OCI-LY7 (cell line): ENCODE measurements at regions of chr19 and their contacts with region 1.

Region 1: DNA sequence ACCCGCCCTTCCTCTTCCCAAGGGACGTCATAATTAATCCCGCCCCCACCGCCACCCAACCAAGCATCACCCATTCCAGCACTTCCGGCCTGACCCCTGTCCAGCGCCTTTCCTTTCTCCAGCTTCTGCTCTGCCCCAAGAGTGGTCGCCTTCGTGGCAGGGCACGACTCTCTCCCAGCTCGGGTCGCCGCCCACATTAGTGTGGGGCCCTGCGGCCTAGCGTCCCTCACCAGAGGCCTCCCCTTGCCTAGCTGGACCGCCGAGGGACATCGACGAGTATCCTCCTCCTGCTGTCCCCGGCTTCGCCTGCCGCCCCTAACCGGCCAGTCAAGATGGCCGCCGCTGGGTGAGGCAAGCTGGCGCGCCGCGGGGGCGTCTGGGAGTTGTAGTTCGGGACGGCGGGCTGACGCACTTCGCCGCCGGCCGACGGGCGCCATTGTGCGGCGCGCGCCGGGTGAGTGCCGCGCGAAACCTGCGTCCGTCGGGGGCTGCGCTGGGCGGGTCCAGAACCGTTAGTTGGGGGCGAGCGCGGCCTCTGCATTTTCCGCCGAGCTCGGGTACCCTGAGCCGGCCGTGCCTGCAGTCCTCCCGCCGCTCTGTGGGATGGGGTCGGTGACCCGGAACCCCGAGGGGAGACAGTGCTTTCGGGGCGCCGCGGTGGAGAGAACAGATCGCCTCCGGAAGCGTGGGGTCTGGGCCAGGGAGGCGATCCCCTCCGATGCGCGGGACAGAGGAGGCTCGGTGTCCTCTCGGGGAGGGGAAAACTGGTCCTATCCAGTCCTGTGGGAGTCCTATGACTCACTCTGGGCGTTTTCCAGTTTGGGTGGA is at the start of gene ZNF274:
- DNase-seq: peak; percentile 96
- H3K4me3 ChIP-seq: peak within 1 kb of the TSS; percentile 85
- H3K27ac ChIP-seq: peak within 1 kb of the TSS; percentile 86
- H3K4me1 ChIP-seq: peaks cover 12% of the 10 kb centered on the region
- CTCF ChIP-seq: no peak
- total RNA-seq, gene ZNF274: 36.4 and 68.3 TPM in 2 replicates

Region 2: GRCh38 chr19:58278157-58279041 is 95.2 kb after region 1 on chr19 and contains the start of gene ZNF8:
- CTCF ChIA-PET with region 1: no interaction called
- POLR2A ChIA-PET with region 1: no interaction called
- intact Hi-C with region 1: loop called (anchors 2 kb)
- DNase-seq: peak; percentile 99
- H3K4me3 ChIP-seq: peak within 1 kb of the TSS; percentile 83
- H3K27ac ChIP-seq: peak within 1 kb of the TSS; percentile 52
- H3K4me1 ChIP-seq: peaks cover 18% of the 10 kb centered on the region
- CTCF ChIP-seq: no peak
- total RNA-seq, gene ZNF8: 7.3 and 7.8 TPM in 2 replicates

Region 3: DNA sequence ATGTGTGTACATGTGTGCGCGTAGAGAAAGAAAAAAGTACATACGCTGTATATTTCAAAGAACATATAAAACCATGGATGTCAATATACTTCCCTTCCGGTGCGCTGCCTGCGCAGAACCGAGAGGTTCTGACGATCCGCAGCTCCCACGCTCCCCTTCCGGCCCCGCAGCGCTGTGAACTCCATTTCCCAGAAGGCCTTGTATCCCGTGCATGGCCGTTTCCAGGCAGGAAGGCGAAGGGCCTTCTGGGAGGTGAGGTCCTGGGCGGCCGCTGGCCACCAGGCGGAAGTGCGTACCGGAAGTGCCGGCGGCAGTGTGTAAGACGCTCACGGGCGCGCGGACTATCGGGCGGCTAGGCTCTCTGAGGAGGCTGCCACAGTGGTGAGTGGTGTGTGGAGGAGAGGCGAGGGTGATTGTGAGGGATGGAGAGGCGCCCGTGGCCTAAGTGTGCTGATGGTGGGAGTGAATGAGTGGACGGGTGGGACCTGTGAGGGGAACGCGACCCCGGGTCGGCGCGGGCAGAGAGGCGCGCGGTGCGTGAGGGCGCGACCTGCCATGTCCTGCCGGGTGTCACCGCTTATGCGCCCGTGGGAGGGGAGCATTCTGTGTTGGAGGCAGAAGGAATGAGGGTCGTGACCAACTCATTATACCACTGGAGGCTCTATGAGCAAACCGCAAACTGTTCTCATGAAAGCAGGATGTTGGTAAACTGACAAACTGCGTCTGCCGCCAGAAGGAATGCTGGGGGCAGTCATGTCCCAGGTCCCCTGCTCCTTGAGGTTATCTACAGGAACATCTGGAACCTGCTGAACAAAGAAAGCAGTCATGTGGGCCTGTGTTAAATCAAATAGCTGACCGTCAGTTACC is 122.1 kb after region 1 on chr19 and contains the start of gene ERVK3-1:
- CTCF ChIA-PET with region 1: no interaction called
- POLR2A ChIA-PET with region 1: no interaction called
- intact Hi-C with region 1: loop called (anchors 2 kb)
- DNase-seq: peak; percentile 98
- H3K4me3 ChIP-seq: peak within 1 kb of the TSS; percentile 94
- H3K27ac ChIP-seq: peak within 1 kb of the TSS; percentile 46
- H3K4me1 ChIP-seq: peaks cover 15% of the 10 kb centered on the region
- CTCF ChIP-seq: no peak
- total RNA-seq, gene ERVK3-1: 61.7 and 79.6 TPM in 2 replicates

Region 4: GRCh38 chr19:58380722-58381466 is 197.7 kb after region 1 on chr19 and contains the start of gene ZNF837:
- CTCF ChIA-PET with region 1: no interaction called
- POLR2A ChIA-PET with region 1: no interaction called
- intact Hi-C with region 1: loop called (anchors 1 kb)
- DNase-seq: peak; percentile 100
- H3K4me3 ChIP-seq: peak within 1 kb of the TSS; percentile 71
- H3K27ac ChIP-seq: peak within 1 kb of the TSS; percentile 56
- H3K4me1 ChIP-seq: peaks cover 32% of the 10 kb centered on the region
- CTCF ChIP-seq: 0 out of 2 replicates have a peak, but pooled peaks have one; percentile 1
- total RNA-seq, gene ZNF837: 1.8 and 3.0 TPM in 2 replicates

Region 5: DNA sequence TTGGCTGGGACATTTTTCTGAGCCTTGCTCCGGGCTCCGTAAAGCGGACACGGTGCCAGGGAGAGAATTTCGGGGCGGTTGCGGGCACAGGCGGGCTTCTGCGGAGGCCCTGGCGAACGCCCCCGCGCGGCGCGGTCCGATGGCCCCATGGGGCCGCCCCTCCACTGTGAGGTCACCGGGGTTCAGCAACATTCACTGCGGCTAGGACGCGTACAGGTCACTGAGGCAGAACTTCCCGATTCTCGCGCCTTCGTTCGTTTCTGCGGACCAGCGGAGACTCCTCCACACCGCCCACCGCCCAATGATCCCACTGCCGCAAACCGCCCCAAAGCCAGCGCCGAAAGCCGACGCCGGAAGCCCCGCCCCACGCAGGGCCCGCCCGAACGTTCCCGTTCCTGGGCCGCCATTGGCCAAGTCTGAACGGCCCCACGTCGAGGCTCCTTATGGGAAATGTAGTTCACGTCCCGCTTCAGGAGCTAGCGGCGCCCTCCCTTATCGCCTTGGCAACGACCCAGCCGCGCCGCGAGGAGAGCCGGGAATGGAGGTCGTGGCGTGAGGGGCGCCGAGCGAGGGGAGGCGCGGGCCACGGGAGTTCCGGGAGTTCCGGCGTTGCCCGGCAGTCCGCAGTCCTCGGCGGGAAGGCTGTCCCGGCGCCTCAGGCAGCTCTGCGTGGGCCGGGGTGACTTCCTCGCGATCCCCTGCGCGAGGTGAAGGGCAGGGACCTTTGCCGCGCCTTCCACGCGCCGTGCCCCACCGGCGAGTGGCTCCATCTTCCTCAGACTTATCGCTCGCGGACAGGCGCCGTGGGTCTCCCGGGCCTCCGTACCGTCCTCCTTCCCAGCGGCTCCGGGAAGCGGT is 225.2 kb after region 1 on chr19 and contains the start of gene ZNF584:
- CTCF ChIA-PET with region 1: no interaction called
- POLR2A ChIA-PET with region 1: no interaction called
- intact Hi-C with region 1: loop called (anchors 2 kb)
- DNase-seq: peak; percentile 97
- H3K4me3 ChIP-seq: peak within 1 kb of the TSS; percentile 83
- H3K27ac ChIP-seq: peak within 1 kb of the TSS; percentile 47
- H3K4me1 ChIP-seq: peaks cover 20% of the 10 kb centered on the region
- CTCF ChIP-seq: peak; percentile 45
- total RNA-seq, gene ZNF584: 9.8 and 12.4 TPM in 2 replicates

Region 6: DNA sequence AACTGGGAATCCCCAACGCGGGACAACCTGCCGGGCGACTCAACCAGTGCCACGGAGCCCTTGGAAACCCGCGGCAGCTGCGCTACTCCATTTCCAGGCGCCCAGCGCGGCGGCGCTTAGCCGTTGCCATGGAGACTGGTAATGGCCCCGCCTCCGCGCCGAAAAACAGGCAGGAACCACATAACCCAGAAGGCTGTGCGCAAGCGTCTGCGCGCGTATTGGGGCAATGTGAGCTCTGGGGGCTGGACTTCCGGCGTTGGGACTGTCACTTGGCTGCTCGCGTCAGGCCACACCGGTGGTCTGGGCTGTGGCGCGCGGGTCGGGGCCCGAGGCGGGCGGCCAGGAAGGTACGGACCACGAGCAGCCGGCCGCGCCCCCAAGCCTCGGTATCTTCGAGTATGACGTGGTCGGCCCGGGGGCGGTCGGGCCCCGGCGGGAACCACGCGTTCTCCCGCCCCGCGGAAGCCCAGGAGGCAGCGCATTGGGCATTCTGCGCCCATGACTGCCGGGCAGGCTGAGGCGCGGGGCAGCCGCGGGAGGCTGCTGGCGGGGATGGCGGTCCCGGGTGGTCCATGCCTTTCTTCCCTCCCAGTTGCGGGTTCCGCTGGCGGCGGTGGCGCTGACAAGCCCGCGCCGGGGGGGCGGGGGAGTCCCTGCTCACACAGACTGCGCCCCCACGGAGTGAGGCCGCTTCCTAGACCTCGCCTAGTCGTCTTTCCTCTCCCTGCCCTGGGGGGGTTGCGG is 268.3 kb after region 1 on chr19 and contains the start of gene ZNF324B:
- CTCF ChIA-PET with region 1: no interaction called
- POLR2A ChIA-PET with region 1: no interaction called
- intact Hi-C with region 1: loop called (anchors 1 kb)
- DNase-seq: peak; percentile 98
- H3K4me3 ChIP-seq: peak within 1 kb of the TSS; percentile 73
- H3K27ac ChIP-seq: no peak within 1 kb of the TSS
- H3K4me1 ChIP-seq: no peaks in the 10 kb centered on the region
- CTCF ChIP-seq: 0 out of 2 replicates have a peak, but pooled peaks have one; percentile 32
- total RNA-seq, gene ZNF324B: 10.6 and 13.8 TPM in 2 replicates